ENCODE measurements at regions of chr5 and their contacts with region 1.

Region 1: DNA sequence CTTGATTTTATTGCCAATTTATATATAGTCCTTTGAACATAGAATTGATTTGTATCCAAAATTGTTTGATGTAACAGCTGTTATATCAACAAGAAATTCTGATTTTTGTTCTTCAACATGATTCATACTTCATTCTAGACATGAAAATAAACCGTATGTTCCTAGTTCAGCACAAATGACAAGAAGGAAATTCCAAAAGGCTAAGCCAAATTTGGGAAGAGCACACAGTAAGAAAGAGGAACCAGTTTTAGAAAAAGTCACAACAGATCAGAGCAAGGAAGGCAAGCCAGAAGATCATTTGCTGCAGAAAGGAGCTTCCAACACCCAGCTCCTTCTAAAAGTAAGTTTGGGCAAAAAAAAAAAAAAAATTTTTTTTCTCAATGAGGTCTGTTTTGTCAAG is 65.0 kb upstream of the MCCC2 start:
- DNase-seq: no peak
- H3K4me3 Mint-ChIP-seq: no peak overlapping the region
- H3K27ac Mint-ChIP-seq: no peak overlapping the region
- H3K4me1 Mint-ChIP-seq: no peaks in the 10 kb centered on the region
- H3K27me3 Mint-ChIP-seq: no peaks in the 10 kb centered on the region

Region 2: GRCh38 chr5:71461360-71461759 is 60.8 kb before region 1 on chr5:
- intact Hi-C with region 1: loop called (anchors 10 kb)
- DNase-seq: no peak
- H3K4me3 Mint-ChIP-seq: no peak overlapping the region
- H3K27ac Mint-ChIP-seq: no peak overlapping the region
- H3K4me1 Mint-ChIP-seq: peaks cover 12% of the 10 kb centered on the region
- H3K27me3 Mint-ChIP-seq: no peaks in the 10 kb centered on the region

Measured in activated CD4-positive, alpha-beta T cell treated with anti-CD3 and anti-CD28 coated beads, Interleukin-2, amount 10 ng/mL, durations not matched to agents 24 days and 14 days (primary cell).